ENCODE measurements at regions of chr2 and their contacts with region 1.

Region 1: GRCh38 chr2:121479882-121480522 is 50.7 kb upstream of the RNU4ATAC start:
- DNase-seq: no peak
- ATAC-seq: peak in 6 of 8 donors; percentile 34 to 51 (median 46)
- H3K4me3 ChIP-seq: no peak overlapping the region
- H3K27ac ChIP-seq: peak overlapping the region in 5 of 10 donors; percentile 0 to 54 (median 24)
- H3K4me1 ChIP-seq: peaks cover 16 to 83% (median 48%) of the 10 kb centered on the region in 9 donors
- H3K27me3 ChIP-seq: no peaks in the 10 kb centered on the region
- CTCF ChIP-seq: peak in 2 of 9 donors; percentile 14 to 21

Region 2: DNA sequence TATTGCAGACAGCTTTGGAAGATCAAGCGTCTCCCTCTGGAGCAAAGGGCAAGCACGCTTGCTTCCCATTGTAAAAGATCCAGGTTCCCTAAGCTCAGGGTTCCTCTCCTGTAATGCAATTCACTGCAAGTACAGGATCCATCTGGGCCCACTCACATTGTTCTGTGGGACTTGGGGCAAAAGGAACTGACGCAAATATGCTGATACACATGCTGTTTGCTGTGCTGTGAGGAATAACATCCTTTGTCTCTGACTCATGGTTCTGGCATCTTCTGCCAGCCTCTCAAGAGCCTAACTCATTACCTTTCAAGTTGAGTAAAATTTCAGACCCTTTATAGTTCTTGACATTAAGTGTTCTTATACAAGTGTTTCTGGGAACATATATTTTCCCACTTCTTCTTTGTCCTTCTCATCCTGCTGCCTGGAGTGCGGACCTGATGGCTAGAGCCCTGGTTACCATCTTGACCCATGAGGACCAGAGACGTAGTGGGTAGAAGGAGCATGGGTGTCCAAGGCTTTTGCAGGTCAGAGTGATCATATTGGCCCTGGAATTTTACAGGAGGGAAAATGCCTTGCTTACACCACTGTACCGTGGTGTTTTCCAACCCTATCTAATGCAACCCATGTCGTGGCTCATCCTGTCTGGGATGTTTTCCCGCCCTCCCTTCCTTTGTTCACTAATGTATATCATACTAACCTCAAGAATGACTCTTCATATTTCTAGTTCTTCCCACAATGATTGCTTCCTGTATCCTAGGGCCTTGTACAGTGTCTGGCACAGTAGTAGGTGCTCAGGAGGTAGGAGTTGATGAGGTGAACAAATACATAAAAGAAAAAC is 890.0 kb before region 1 on chr2:
- intact Hi-C with region 1: no loop called
- DNase-seq: no peak
- ATAC-seq: peak in 4 of 8 donors; percentile 20 to 88 (median 57)
- H3K4me3 ChIP-seq: no peak overlapping the region
- H3K27ac ChIP-seq: peak overlapping the region in 2 of 10 donors; percentile 33 to 41
- H3K4me1 ChIP-seq: peaks cover 0 to 11% (median 4%) of the 10 kb centered on the region in 9 donors
- H3K27me3 ChIP-seq: peaks cover 8 to 39% (median 27%) of the 10 kb centered on the region in 7 donors
- CTCF ChIP-seq: no peak

Region 3: DNA sequence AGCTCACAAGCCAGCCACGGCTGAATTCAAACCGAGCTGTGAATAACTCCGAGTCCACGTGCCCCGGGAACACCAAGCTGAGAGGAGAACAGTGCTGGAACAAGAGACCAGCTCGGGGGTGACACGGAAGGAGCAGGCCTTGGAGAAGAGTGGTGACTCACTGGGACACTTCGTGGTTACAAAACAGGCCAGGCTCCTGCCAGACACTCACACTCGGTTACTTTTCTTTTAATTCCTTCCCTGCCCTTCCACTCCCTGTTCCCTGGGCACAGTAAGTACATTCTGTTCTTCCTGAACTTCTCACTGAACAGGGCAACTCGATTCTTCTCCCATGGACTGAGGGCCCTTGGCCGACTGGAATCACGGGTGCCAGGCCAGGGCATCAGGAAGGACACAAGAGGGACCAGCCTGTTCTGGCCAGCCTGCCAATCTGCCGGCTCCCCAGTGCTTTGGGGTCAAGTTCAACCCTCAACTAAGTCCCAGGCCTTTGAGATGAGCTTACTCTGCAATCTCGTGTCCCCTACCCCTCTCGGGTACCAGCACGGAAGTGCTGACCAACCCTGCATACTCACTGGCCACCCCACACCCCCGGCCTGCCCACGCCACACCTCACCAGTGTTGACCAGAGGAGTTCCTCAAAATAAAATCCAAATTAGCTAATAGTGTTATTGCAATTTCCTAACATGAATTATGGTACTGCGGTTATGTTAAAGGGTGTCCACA is 282.5 kb before region 1 on chr2:
- intact Hi-C with region 1: loop called in 1 of 10 experiments (anchors 10 kb)
- DNase-seq: peak in 1 of 2 donors; percentile 40
- ATAC-seq: peak; percentile 56 to 93 (median 70)
- H3K4me3 ChIP-seq: no peak overlapping the region
- H3K27ac ChIP-seq: peak overlapping the region in 4 of 10 donors; percentile 49 to 84 (median 52)
- H3K4me1 ChIP-seq: peaks cover 0 to 18% (median 0%) of the 10 kb centered on the region in 9 donors
- H3K27me3 ChIP-seq: no peaks in the 10 kb centered on the region
- CTCF ChIP-seq: no peak

Region 4: GRCh38 chr2:121755236-121756111 is 275.5 kb after region 1 on chr2 and contains the start of gene TSN:
- intact Hi-C with region 1: no loop called
- DNase-seq: peak; percentile 97 to 98
- ATAC-seq: peak; percentile 99 to 100 (median 100)
- H3K4me3 ChIP-seq: peak within 1 kb of the TSS; percentile 79 to 95 (median 90)
- H3K27ac ChIP-seq: peak within 1 kb of the TSS; percentile 28 to 86 (median 79)
- H3K4me1 ChIP-seq: peaks cover 5 to 32% (median 28%) of the 10 kb centered on the region in 9 donors
- H3K27me3 ChIP-seq: no peaks in the 10 kb centered on the region
- CTCF ChIP-seq: no peak
- total RNA-seq, gene TSN: 32.5 to 54.4 (median 48.7) TPM